Activated naive CD4-positive, alpha-beta T cell treated with anti-CD3 and anti-CD28 coated beads, Interleukin-2, amount 10 ng/mL, durations not matched to agents 7 days and 5 days (primary cell): ENCODE measurements at regions of chr17 and their contacts with region 1.

Region 1: DNA sequence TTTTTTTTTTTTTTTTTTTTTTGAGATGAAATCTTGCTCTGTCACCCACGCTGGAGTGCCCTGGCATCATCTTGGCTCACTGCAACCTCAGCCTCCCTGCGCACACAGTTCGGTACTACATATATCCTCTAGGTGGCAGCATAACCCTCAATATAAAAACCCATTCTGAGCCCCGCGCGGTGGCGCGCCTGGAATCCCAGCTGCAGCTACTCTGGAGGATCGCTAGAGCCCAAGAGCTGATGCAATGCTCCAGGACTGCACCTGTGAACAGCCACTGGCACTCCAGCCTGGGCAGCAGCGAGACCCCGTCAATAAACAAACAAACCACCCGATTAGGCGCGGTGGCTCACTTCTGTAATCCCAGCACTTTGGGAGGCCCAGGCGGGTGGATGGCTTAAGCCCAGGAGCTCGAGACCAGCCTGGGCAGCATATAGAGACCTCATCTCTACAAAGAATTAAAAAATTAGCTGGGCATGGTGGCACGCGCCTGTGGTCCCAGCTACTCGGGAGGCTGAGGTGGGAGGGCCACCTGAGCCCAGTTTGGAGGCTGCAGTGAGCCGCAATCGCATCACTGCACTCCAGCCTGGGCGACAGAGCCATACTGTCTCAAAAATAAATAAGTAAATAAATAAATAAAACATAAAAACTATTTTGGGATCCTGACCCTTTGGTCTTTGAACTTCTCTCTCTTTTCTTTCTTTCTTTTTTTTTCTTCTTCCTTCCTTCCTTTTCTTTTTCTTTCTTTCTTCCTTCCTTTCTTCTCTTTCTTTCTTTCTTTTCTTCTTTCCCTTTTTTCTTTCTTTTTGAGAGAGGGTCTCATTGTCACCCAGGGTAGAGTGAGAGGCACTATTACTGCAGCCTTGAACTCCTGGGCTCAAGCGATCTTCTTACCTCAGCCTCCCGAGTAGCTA is 15.4 kb upstream of the AKAP10 start:
- DNase-seq: peak; percentile 80
- H3K4me3 Mint-ChIP-seq: no peak overlapping the region
- H3K27ac Mint-ChIP-seq: no peak overlapping the region
- H3K4me1 Mint-ChIP-seq: peaks cover 7% of the 10 kb centered on the region
- H3K27me3 Mint-ChIP-seq: peaks cover 47% of the 10 kb centered on the region

Region 2: DNA sequence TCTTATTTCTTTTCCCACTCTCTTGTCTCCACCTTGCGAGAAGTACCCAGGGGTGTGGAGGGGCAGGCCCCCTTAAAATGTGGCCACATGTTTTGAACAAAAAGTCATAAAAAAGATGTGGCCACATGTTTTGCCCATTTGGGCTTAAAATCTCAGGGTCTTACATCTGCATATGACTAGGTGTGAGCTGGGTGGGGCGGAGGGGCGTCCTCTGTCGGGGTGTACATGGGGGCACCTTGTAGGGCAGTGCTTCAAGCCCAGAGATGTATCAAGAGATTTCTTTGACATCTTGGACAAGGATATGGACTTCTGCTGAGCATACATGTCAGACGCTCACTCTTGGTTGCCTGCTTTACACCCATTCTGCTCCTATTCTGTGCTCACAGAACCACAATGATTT is 472.4 kb before region 1 on chr17:
- CTCF ChIA-PET with region 1: no interaction called
- DNase-seq: no peak
- H3K4me3 Mint-ChIP-seq: no peak overlapping the region
- H3K27ac Mint-ChIP-seq: no peak overlapping the region
- H3K4me1 Mint-ChIP-seq: no peaks in the 10 kb centered on the region
- H3K27me3 Mint-ChIP-seq: peaks cover 36% of the 10 kb centered on the region

Region 3: GRCh38 chr17:20009302-20010098 is 16.4 kb after region 1 on chr17 and contains the start of gene SPECC1:
- CTCF ChIA-PET with region 1: interaction called, 14 read pairs
- DNase-seq: peak; percentile 87
- H3K4me3 Mint-ChIP-seq: peak within 1 kb of the TSS; percentile 77
- H3K27ac Mint-ChIP-seq: no peak within 1 kb of the TSS
- H3K4me1 Mint-ChIP-seq: peaks cover 17% of the 10 kb centered on the region
- H3K27me3 Mint-ChIP-seq: peaks cover 68% of the 10 kb centered on the region

Region 4: GRCh38 chr17:20114466-20114865 is 121.4 kb after region 1 on chr17:
- CTCF ChIA-PET with region 1: interaction called, 31 read pairs
- DNase-seq: no peak
- H3K4me3 Mint-ChIP-seq: no peak overlapping the region
- H3K27ac Mint-ChIP-seq: no peak overlapping the region
- H3K4me1 Mint-ChIP-seq: no peaks in the 10 kb centered on the region
- H3K27me3 Mint-ChIP-seq: peaks cover 16% of the 10 kb centered on the region

Region 5: GRCh38 chr17:20121359-20122253 is 128.5 kb after region 1 on chr17:
- CTCF ChIA-PET with region 1: interaction called, 31 read pairs
- DNase-seq: peak; percentile 77
- H3K4me3 Mint-ChIP-seq: no peak overlapping the region
- H3K27ac Mint-ChIP-seq: no peak overlapping the region
- H3K4me1 Mint-ChIP-seq: no peaks in the 10 kb centered on the region
- H3K27me3 Mint-ChIP-seq: peaks cover 20% of the 10 kb centered on the region